Kidney (tissue), 22 donors: ENCODE measurements at regions of chr9 and their contacts with region 1.

Region 1: DNA sequence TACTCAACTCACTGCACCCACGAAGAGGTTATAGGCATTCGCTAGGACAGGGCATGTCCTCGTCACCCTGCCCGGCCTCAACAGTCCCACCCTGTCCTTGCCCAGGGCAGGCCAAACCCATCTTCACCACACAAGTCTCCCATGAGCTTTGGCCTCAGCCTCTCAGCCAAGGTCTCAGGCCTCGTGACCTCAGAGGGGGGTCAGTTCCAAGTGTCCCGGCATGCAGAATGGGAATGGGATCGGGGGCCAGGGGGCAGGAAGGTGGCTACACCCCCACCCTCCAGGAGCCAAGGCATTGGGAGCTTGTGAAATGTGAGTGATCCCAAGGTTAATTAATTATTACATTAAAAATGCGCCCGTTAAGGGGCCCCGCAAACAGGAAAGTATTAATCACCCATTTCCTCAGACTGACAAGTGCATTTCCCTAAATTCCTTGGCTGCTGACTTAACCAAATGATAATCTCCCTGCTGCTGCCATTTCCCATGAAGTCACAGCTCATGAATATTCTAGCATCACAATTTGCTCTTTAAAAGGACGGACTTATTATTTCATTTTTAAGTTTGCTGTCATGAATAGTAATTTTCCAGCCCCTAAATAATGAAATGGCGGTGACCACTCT is 8.0 kb upstream of the UBAC1 start:
- DNase-seq: peak in 4 of 5 donors; percentile 34 to 82 (median 63)
- H3K4me3 ChIP-seq: no peak overlapping the region
- H3K27ac ChIP-seq: peak overlapping the region; percentile 80 to 92
- H3K4me1 ChIP-seq: peaks cover 0 to 18% (median 6%) of the 10 kb centered on the region in 3 donors
- H3K27me3 ChIP-seq: no peaks in the 10 kb centered on the region
- CTCF ChIP-seq: no peak

Region 2: DNA sequence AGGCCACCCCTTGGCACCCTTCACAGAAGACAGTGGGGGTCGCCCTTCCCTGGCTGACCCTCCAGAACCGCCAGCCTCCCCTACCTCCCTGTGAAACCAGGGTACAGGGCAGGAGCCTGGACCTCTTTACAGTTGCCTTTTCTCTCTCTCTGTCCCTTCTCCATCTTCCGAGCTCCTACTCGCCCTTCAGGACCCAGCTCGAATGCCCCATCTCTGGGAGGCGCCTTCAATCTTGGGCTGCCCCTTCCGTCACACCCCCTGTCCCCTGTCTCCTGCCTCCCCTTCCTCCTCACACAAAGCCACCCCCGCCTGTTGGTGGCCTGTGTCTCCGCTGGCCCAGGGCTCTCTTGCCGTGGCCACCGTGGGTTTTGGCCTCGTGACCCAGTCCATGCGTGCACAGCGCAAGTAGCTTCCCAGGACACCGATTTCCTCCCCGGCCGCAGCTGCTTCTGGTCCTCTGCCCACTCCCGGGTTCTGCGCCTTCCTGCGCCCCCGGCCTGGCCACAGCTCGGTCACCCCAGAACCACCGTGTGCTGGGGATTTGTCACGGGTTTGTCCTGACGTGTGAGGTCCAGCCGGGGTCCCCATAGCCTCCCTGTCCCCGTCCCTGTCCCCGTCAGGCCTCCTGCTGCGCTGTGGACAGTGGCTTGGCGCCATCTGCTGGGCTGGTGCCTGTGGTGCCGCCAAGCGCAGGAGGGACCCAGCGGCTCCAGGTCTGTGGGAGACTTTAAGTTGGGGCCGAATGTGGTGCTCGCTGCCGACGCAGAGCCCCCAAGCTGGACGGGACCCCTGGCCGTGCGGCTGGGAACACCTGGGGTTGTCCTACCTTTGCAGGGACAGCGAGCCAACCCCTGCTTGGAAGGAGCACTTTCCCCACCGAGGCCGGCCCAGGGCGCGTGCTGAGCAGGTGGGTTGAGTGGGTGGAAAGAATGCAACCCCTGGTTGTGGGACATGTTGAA is 153.5 kb after region 1 on chr9:
- intact Hi-C with region 1: loop called (anchors 5 kb)
- DNase-seq: peak in 4 of 5 donors; percentile 70 to 80 (median 75)
- H3K4me3 ChIP-seq: no peak overlapping the region
- H3K27ac ChIP-seq: no peak overlapping the region
- H3K4me1 ChIP-seq: peaks cover 0 to 11% (median 0%) of the 10 kb centered on the region in 3 donors
- H3K27me3 ChIP-seq: peaks cover 2% of the 10 kb centered on the region
- CTCF ChIP-seq: peak; percentile 98